GM23248 (cell line): ENCODE measurements at regions of chr1 and their contacts with region 1.

Region 1: DNA sequence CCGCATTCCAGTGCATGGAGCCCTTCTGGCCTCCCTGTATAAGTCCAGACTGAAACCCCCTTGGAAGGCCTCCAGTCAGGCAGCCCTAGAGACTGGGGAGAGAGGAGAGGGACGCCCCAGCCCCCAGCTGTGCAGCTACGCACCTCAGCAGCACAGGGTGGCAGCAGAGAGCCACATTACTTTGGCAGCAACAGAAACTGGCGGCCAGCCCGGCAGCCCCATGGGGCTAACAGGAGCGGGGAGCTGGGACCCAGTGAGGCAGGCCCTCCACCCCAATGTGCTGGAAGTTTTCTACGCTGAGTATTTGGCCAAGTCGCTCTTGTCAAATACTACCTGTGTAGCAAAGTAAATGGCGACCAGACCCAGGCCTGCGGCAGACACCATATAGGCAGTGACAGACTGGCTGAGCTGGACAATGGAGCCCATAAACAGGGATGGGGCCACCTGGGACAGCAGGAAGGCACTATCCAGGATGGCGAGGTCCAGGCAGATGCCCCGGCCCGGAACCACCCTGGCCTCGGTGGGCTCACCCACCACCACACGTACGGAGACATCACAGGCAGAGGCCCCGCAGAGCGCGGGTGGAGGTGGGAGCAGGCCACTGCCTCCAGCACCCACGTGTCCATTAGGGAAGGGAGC is 21.2 kb downstream of the SLC45A3 start:
- DNase-seq: peak; percentile 84
- H3K4me3 ChIP-seq: no peak overlapping the region
- H3K27ac ChIP-seq: no peak overlapping the region
- H3K4me1 ChIP-seq: no peaks in the 10 kb centered on the region
- H3K27me3 ChIP-seq: no peaks in the 10 kb centered on the region

Region 2: DNA sequence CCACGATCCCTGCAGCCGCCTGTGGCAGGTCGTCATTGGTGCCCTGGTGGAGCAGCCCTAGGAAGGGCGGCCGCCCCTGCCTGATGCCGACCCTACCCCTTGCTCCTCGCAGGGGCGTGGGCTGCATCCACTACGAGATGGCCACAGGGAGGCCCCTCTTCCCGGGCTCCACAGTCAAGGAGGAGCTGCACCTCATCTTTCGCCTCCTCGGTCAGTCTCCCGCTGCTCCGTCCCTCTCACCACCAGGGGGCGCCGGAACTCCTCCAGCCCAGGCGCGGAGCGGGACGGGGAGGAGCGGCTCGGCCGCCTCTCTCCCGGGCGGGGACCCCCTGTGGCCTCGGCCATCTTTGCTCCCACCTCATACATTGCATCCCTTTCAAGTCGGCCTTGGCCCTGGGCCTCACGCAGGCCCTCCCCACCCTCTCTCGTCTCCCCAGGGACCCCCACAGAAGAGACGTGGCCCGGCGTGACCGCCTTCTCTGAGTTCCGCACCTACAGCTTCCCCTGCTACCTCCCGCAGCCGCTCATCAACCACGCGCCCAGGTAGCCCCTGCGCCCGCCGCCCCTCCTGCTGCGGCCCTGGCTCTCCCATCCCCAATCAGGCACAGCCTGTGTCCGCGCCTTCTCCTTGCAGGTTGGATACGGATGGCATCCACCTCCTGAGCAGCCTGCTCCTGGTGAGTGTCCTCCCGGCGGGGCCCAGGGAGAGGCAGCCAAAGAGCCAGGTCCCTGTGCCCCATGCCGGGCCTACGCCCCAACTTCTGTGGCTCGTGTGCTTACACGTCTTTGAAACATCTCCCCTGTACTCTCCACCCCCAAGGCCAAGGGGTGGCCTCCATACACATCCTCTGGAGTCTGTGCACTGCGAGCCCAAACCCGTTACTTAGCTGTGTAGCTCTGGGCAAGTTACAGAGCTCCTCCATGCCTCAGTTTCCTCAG is 129.9 kb before region 1 on chr1:
- in situ Hi-C with region 1: loop called (anchors 10 kb)
- DNase-seq: peak; percentile 85
- H3K4me3 ChIP-seq: peak overlapping the region; percentile 61
- H3K27ac ChIP-seq: no peak overlapping the region
- H3K4me1 ChIP-seq: no peaks in the 10 kb centered on the region
- H3K27me3 ChIP-seq: peaks cover 3% of the 10 kb centered on the region; the same call in 1 of the 2 replicates

Region 3: GRCh38 chr1:205591522-205592351 is 67.3 kb before region 1 on chr1:
- in situ Hi-C with region 1: loop called (anchors 10 kb)
- DNase-seq: peak; percentile 90
- H3K4me3 ChIP-seq: peak overlapping the region; percentile 57
- H3K27ac ChIP-seq: no peak overlapping the region
- H3K4me1 ChIP-seq: peaks cover 4% of the 10 kb centered on the region; the same call in 1 of the 2 replicates
- H3K27me3 ChIP-seq: no peaks in the 10 kb centered on the region